Right lobe of liver (tissue), 6 donors: ENCODE measurements at regions of chr16 and their contacts with region 1.

Region 1: GRCh38 chr16:67159593-67160406 is at the starts of genes FBXL8 and TRADD:
- DNase-seq: peak; percentile 86 to 88 (median 86)
- ATAC-seq: peak; percentile 71 to 80 (median 75)
- H3K4me3 ChIP-seq: peak within 1 kb of the TSS; percentile 81 to 94 (median 85)
- H3K27ac ChIP-seq: peak within 1 kb of the TSS; percentile 43 to 67 (median 62)
- H3K4me1 ChIP-seq: peaks cover 0 to 40% (median 18%) of the 10 kb centered on the region in 4 donors
- H3K27me3 ChIP-seq: no peaks in the 10 kb centered on the region
- CTCF ChIP-seq: peak; percentile 18 to 35 (median 33)
- POLR2A ChIP-seq: peak; percentile 85
- total RNA-seq, gene FBXL8: 6.1 to 15.0 (median 11.6) TPM
- total RNA-seq, gene TRADD: 9.5 to 16.3 (median 10.6) TPM

Region 2: GRCh38 chr16:66959704-66960161 is 200.1 kb before region 1 on chr16:
- intact Hi-C with region 1: no loop called
- DNase-seq: no peak
- ATAC-seq: no peak
- H3K4me3 ChIP-seq: no peak overlapping the region
- H3K27ac ChIP-seq: no peak overlapping the region
- H3K4me1 ChIP-seq: peaks cover 0 to 51% (median 23%) of the 10 kb centered on the region in 4 donors
- H3K27me3 ChIP-seq: no peaks in the 10 kb centered on the region
- CTCF ChIP-seq: no peak
- POLR2A ChIP-seq: no peak

Region 3: DNA sequence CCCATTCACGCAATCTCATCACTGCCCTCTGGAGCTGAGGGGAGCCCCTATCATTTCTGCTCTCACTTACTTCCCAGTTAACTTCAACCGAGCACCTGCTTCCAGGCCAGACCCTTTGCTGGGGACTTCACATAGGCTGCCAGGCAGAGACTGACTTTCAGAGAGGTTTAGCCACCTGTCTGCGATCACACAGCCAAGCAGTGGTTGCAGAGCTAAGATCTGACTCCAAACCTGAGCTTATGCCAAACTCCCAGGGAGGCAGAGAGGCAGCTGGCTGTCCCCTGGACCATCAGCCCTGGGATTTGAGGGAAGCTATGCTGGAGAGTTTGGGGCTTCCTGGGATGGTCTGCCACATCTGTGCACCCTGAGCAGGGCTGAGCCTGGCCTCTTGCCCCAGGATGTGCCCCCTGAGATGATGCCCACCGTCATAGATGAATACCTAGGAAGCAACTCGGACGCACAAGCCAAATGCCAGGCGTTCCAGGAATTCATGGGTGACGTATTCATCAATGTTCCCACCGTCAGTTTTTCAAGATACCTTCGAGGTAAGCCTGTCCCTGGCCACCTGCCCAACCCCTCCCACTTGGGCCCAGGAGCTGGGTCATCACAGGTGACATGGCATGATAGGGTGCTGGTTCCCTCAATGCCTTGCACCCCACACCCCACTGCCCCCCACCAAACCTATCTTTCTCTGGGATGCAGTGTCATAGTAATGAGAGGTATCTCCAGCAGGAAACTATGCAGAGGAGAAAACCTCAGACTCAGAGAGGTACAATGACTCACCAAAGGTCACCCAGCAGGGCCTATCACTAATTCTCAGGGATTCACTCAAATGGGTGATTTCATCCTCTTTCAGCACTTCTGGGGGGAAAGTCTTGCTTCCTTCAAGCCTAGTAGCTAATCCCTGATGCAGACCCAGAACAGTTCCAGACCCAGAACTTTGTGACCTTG is 188.8 kb before region 1 on chr16:
- intact Hi-C with region 1: loop called (anchors 5 to 10 kb)
- DNase-seq: no peak
- ATAC-seq: no peak
- H3K4me3 ChIP-seq: no peak overlapping the region
- H3K27ac ChIP-seq: no peak overlapping the region
- H3K4me1 ChIP-seq: peaks cover 0 to 10% (median 2%) of the 10 kb centered on the region in 4 donors
- H3K27me3 ChIP-seq: no peaks in the 10 kb centered on the region
- CTCF ChIP-seq: no peak
- POLR2A ChIP-seq: no peak

Region 4: DNA sequence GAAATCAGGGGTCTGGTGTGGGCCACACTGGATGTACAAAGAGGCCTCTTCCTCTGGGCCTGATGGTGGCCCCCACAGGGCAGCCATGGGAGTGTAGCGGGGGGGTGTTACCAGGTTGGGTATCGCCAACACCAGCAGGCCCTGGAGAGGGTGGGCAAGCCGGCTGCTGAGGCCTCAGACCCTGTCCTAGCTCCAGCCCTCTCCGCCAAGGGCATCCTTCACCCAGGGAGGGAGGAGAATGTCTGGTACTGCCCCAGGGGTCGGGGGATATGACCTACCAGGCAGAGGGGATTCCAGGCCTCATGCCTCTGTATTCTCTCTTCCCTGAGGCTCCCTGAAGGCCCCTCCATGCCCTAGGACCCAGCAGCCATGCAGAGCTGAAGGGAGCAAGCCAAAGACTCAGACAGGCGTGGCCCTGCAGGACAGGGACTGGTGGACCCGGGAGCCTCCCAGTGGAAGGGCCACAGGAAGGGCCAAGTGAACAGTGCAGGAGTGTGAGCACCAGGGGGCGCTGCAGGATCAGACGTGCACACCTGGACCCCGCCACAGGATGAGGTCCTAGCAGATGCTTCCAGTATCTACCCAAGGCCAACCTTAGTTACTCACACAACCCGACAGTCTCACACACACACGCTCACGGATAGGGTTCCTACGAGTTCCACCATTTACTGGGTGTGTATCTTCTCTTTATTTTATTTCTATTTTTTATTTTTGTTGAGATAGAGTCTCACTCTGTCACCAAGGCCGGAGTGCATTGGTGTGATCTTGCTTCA is 182.3 kb before region 1 on chr16:
- intact Hi-C with region 1: loop called (anchors 5 to 10 kb)
- DNase-seq: peak; percentile 91 to 94 (median 92)
- ATAC-seq: peak; percentile 98 to 99 (median 98)
- H3K4me3 ChIP-seq: no peak overlapping the region
- H3K27ac ChIP-seq: no peak overlapping the region
- H3K4me1 ChIP-seq: peaks cover 0 to 5% (median 3%) of the 10 kb centered on the region in 4 donors
- H3K27me3 ChIP-seq: no peaks in the 10 kb centered on the region
- CTCF ChIP-seq: peak; percentile 97 to 99 (median 98)
- POLR2A ChIP-seq: no peak

Region 5: DNA sequence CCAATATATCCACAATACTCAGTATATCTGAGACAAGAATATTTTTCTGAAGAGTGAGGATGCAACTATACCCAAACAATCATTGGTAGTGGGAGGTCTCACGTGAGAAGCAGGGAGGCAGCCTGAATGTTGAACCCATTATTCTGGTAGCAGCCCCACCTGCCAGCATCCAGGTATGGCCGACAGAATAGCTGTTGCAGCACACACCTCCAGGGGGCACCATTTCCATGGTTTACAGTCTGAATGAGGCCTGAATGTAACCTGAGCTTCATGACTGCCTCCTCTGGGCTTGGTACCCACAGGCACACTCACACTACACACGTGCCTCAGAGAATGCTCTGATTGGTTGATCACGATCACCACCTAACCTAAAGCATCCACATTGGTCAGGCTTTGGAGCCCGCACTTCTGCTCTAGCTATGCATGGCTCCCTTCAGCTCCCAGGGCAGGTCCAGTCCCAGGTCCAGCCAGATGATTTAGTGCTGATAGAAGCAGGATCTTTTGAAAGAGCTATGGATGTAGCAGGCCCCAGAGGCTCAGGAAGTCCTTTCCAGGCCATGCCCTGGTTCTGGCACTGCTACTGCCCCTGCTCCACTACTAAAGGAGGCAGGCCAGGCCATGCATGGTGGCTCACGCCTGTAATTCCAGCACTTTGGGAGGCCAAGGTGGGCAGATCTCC is 141.9 kb before region 1 on chr16:
- intact Hi-C with region 1: loop called (anchors 10 kb)
- DNase-seq: peak; percentile 67 to 86 (median 83)
- ATAC-seq: peak; percentile 86 to 94 (median 93)
- H3K4me3 ChIP-seq: no peak overlapping the region
- H3K27ac ChIP-seq: no peak overlapping the region
- H3K4me1 ChIP-seq: peaks cover 0 to 11% (median 3%) of the 10 kb centered on the region in 4 donors
- H3K27me3 ChIP-seq: no peaks in the 10 kb centered on the region
- CTCF ChIP-seq: peak; percentile 71 to 87 (median 85)
- POLR2A ChIP-seq: no peak

Region 6: GRCh38 chr16:67091906-67092566 is 67.8 kb before region 1 on chr16:
- intact Hi-C with region 1: no loop called
- DNase-seq: no peak
- ATAC-seq: no peak
- H3K4me3 ChIP-seq: no peak overlapping the region
- H3K27ac ChIP-seq: no peak overlapping the region
- H3K4me1 ChIP-seq: no peaks in the 10 kb centered on the region
- H3K27me3 ChIP-seq: no peaks in the 10 kb centered on the region
- CTCF ChIP-seq: no peak
- POLR2A ChIP-seq: no peak

Region 7: GRCh38 chr16:67109407-67110135 is 50.2 kb before region 1 on chr16 and contains the start of gene PHAF1:
- intact Hi-C with region 1: loop called in 1 of 2 experiments (anchors 10 kb)
- DNase-seq: peak; percentile 96 to 97 (median 97)
- ATAC-seq: peak; percentile 79 to 89 (median 84)
- H3K4me3 ChIP-seq: peak within 1 kb of the TSS; percentile 97 to 99 (median 99)
- H3K27ac ChIP-seq: peak within 1 kb of the TSS; percentile 82
- H3K4me1 ChIP-seq: peaks cover 0 to 37% (median 5%) of the 10 kb centered on the region in 4 donors
- H3K27me3 ChIP-seq: no peaks in the 10 kb centered on the region
- CTCF ChIP-seq: no peak
- POLR2A ChIP-seq: peak; percentile 68
- total RNA-seq, gene PHAF1: 22.3 to 45.1 (median 32.4) TPM

Region 8: GRCh38 chr16:67207857-67208519 is 48.2 kb after region 1 on chr16:
- intact Hi-C with region 1: no loop called
- DNase-seq: no peak
- ATAC-seq: no peak
- H3K4me3 ChIP-seq: no peak overlapping the region
- H3K27ac ChIP-seq: no peak overlapping the region
- H3K4me1 ChIP-seq: peaks cover 0 to 14% (median 0%) of the 10 kb centered on the region in 4 donors
- H3K27me3 ChIP-seq: no peaks in the 10 kb centered on the region
- CTCF ChIP-seq: no peak
- POLR2A ChIP-seq: no peak